ENCODE measurements at regions of chr14 and their contacts with region 1.

Region 1: GRCh38 chr14:68312884-68313610 is 479.8 kb downstream of the ZFP36L1 start:
- DNase-seq: no peak
- H3K4me3 ChIP-seq: no peak overlapping the region
- H3K27ac ChIP-seq: no peak overlapping the region
- H3K4me1 ChIP-seq: no peaks in the 10 kb centered on the region
- H3K27me3 ChIP-seq: no peaks in the 10 kb centered on the region
- CTCF ChIP-seq: no peak

Region 2: GRCh38 chr14:68349900-68350629 is 37.0 kb after region 1 on chr14:
- CTCF ChIA-PET with region 1: no interaction called
- dilution Hi-C with region 1: loop called (anchors 5 kb)
- in situ Hi-C with region 1: no loop called
- intact Hi-C with region 1: no loop called
- DNase-seq: no peak
- H3K4me3 ChIP-seq: no peak overlapping the region
- H3K27ac ChIP-seq: no peak overlapping the region
- H3K4me1 ChIP-seq: no peaks in the 10 kb centered on the region
- H3K27me3 ChIP-seq: no peaks in the 10 kb centered on the region
- CTCF ChIP-seq: no peak

Measured in mammary epithelial cell (primary cell).